Endothelial cell of umbilical vein (primary cell): ENCODE measurements at regions of chr5 and their contacts with region 1.

Region 1: GRCh38 chr5:98827161-98827560 is 53.7 kb downstream of the RGMB start:
- DNase-seq: peak; percentile 49
- H3K4me3 ChIP-seq: no peak overlapping the region
- H3K27ac ChIP-seq: no peak overlapping the region
- H3K4me1 ChIP-seq: no peaks in the 10 kb centered on the region
- H3K27me3 ChIP-seq: no peaks in the 10 kb centered on the region
- CTCF ChIP-seq: peak; percentile 12 to 31
- POLR2A ChIP-seq: no peak

Region 2: GRCh38 chr5:97162045-97162444 is 1665.1 kb before region 1 on chr5:
- CTCF ChIA-PET with region 1: no interaction called
- POLR2A ChIA-PET with region 1: no interaction called
- dilution Hi-C with region 1: no loop called
- intact Hi-C with region 1: loop called (anchors 2 kb)
- DNase-seq: peak; percentile 86
- H3K4me3 ChIP-seq: no peak overlapping the region
- H3K27ac ChIP-seq: no peak overlapping the region
- H3K4me1 ChIP-seq: no peaks in the 10 kb centered on the region
- H3K27me3 ChIP-seq: no peaks in the 10 kb centered on the region
- CTCF ChIP-seq: peak; percentile 68 to 79
- POLR2A ChIP-seq: no peak

Region 3: GRCh38 chr5:97183100-97183929 is 1643.8 kb before region 1 on chr5 and contains the start of gene RIOK2:
- CTCF ChIA-PET with region 1: no interaction called
- POLR2A ChIA-PET with region 1: no interaction called
- dilution Hi-C with region 1: no loop called
- intact Hi-C with region 1: loop called (anchors 2 kb)
- DNase-seq: peak; percentile 99
- H3K4me3 ChIP-seq: peak within 1 kb of the TSS; percentile 83 to 97 (median 91)
- H3K27ac ChIP-seq: peak within 1 kb of the TSS; percentile 85
- H3K4me1 ChIP-seq: peaks cover 15% of the 10 kb centered on the region
- H3K27me3 ChIP-seq: no peaks in the 10 kb centered on the region
- CTCF ChIP-seq: no peak
- POLR2A ChIP-seq: peak; percentile 81
- total RNA-seq, gene RIOK2: 17.5 and 25.4 TPM in 2 replicates

Region 4: DNA sequence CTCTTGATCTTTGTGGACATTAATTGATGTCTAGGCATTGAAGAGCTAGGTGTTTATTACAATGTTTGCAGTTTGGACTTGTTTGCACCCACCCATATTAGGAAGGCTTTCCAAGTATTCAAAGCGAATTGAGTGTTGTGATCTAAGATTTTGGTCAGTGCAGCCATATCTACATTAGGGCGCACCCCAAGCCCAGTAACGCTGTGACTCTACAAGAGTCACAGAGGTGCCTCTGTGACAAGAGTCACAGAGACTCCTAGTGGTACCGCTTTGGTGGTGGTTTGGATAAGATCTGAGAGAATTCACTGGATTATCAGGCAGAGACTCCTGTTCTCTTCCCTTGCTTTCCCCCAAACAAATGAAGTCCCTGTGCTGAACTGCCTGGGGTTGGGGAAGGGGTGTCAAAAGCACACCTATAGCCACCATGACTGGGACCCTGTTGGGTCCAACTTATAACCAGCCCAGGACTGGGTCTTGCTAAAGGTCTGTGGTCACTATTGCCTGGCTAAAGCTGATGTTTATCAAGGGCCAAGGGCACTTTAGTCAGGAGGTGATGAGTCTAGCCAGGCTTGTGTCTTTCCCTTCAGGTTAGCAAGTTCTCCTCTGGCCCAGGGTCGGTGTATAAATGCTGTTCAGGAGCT is 1530.0 kb before region 1 on chr5:
- CTCF ChIA-PET with region 1: no interaction called
- POLR2A ChIA-PET with region 1: no interaction called
- dilution Hi-C with region 1: no loop called
- intact Hi-C with region 1: loop called (anchors 1 kb)
- DNase-seq: peak; percentile 43
- H3K4me3 ChIP-seq: no peak overlapping the region
- H3K27ac ChIP-seq: no peak overlapping the region
- H3K4me1 ChIP-seq: no peaks in the 10 kb centered on the region
- H3K27me3 ChIP-seq: no peaks in the 10 kb centered on the region
- CTCF ChIP-seq: peak; percentile 40 to 47
- POLR2A ChIP-seq: no peak